ENCODE measurements at regions of chr9 and their contacts with region 1.

Region 1: DNA sequence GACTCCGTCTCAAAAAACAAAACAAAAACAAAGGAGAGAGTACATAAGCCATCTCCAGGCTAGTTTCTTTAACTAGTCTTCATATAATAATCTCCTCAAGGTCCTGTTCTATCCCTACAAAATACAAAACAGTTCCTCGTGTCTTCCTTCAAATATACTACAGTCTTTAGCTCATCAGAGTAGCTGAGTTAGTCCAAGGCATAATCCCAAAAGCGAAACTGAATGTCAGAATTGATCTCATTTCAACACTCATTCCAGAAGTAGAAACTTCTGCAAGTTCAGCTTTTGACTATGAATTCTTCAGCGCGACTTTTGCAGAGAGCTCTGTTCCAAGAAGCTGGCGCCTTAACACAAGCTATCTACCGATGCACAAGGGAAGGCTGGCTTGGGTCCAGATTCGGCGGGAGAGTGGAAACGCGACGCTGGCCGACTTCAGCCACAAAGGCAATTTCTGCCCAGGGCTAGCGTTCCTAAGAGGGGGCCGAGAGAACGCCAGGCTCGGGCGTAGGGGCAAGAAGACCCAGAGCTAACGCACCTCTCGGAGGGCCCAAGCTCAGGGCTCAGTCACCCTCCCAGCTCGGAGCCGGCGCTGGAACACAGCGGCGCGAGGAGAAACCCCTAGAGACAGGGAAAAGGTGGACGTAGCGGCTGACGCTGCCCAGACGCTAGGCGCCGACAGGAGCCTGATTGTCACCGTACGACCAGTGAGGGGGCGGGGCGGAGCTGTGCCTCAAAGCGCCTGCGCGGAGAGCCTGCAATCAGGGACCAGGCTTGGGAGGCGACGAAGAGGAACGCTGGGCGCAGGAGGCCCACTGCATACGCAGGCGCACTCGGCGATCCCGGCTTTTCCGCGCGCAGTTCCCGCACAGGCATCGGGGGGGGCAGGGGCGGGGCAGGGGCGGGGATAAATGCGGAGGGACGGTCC is 469 bp upstream of the HSDL2 start:
- DNase-seq: peak; percentile 89 to 97 (median 93)
- ATAC-seq: peak; percentile 98
- H3K4me3 ChIP-seq: peak overlapping the region; percentile 78
- H3K4me3 Mint-ChIP-seq: peak overlapping the region; percentile 86 to 100 (median 99)
- H3K27ac ChIP-seq: peak overlapping the region; percentile 85
- H3K27ac Mint-ChIP-seq: peak overlapping the region; percentile 84 to 99 (median 97)
- H3K4me1 ChIP-seq: peaks cover 14 to 17% of the 10 kb centered on the region in 2 donors
- H3K4me1 Mint-ChIP-seq: peaks cover 24 to 61% (median 53%) of the 10 kb centered on the region in 7 donors
- H3K27me3 ChIP-seq: no peaks in the 10 kb centered on the region
- H3K27me3 Mint-ChIP-seq: no peaks in the 10 kb centered on the region

Region 2: GRCh38 chr9:111483862-111484571 is 895.4 kb before region 1 on chr9 and contains the start of gene ECPAS:
- CTCF ChIA-PET with region 1: no interaction called
- POLR2A ChIA-PET with region 1: no interaction called
- intact Hi-C with region 1: loop called (anchors 5 to 10 kb)
- DNase-seq: peak; percentile 53 to 78 (median 62)
- ATAC-seq: peak; percentile 74
- H3K4me3 ChIP-seq: peak within 1 kb of the TSS; percentile 66
- H3K4me3 Mint-ChIP-seq: peak within 1 kb of the TSS; percentile 69 to 93 (median 88)
- H3K27ac ChIP-seq: peak within 1 kb of the TSS; percentile 74
- H3K27ac Mint-ChIP-seq: peak within 1 kb of the TSS; percentile 60 to 92 (median 85)
- H3K4me1 ChIP-seq: peaks cover 0 to 8% of the 10 kb centered on the region in 2 donors
- H3K4me1 Mint-ChIP-seq: peaks cover 16 to 31% (median 27%) of the 10 kb centered on the region in 7 donors
- H3K27me3 ChIP-seq: no peaks in the 10 kb centered on the region
- H3K27me3 Mint-ChIP-seq: peaks cover 0 to 13% (median 5%) of the 10 kb centered on the region in 5 donors
- total RNA-seq, gene ECPAS: 35.4 to 86.1 (median 49.2) TPM

Region 3: GRCh38 chr9:111661150-111661801 is 718.2 kb before region 1 on chr9 and contains the start of gene GNG10:
- CTCF ChIA-PET with region 1: no interaction called
- POLR2A ChIA-PET with region 1: no interaction called
- intact Hi-C with region 1: loop called (anchors 2 to 5 kb)
- DNase-seq: peak; percentile 57 to 79 (median 68)
- ATAC-seq: peak; percentile 95
- H3K4me3 ChIP-seq: peak within 1 kb of the TSS; percentile 70
- H3K4me3 Mint-ChIP-seq: peak within 1 kb of the TSS; percentile 87 to 97 (median 93)
- H3K27ac ChIP-seq: peak within 1 kb of the TSS; percentile 71
- H3K27ac Mint-ChIP-seq: peak within 1 kb of the TSS; percentile 82 to 97 (median 92)
- H3K4me1 ChIP-seq: peaks cover 18 to 31% of the 10 kb centered on the region in 2 donors
- H3K4me1 Mint-ChIP-seq: peaks cover 16 to 44% (median 32%) of the 10 kb centered on the region in 7 donors
- H3K27me3 ChIP-seq: no peaks in the 10 kb centered on the region
- H3K27me3 Mint-ChIP-seq: no peaks in the 10 kb centered on the region
- total RNA-seq, gene GNG10: 5.3 to 26.1 (median 12.2) TPM

Region 4: GRCh38 chr9:111754800-111755199 is 624.6 kb before region 1 on chr9:
- CTCF ChIA-PET with region 1: no interaction called
- POLR2A ChIA-PET with region 1: no interaction called
- intact Hi-C with region 1: no loop called
- DNase-seq: no peak
- ATAC-seq: no peak
- H3K4me3 ChIP-seq: no peak overlapping the region
- H3K4me3 Mint-ChIP-seq: no peak overlapping the region
- H3K27ac ChIP-seq: no peak overlapping the region
- H3K27ac Mint-ChIP-seq: no peak overlapping the region
- H3K4me1 ChIP-seq: no peaks in the 10 kb centered on the region
- H3K4me1 Mint-ChIP-seq: peaks cover 0 to 3% (median 0%) of the 10 kb centered on the region in 7 donors
- H3K27me3 ChIP-seq: no peaks in the 10 kb centered on the region
- H3K27me3 Mint-ChIP-seq: no peaks in the 10 kb centered on the region

Region 5: GRCh38 chr9:112097712-112098688 is 281.4 kb before region 1 on chr9:
- CTCF ChIA-PET with region 1: no interaction called
- POLR2A ChIA-PET with region 1: interaction called, 4 read pairs
- intact Hi-C with region 1: loop called in 1 of 2 experiments (anchors 5 kb)
- DNase-seq: peak; percentile 41 to 85 (median 68)
- ATAC-seq: peak; percentile 93
- H3K4me3 ChIP-seq: no peak overlapping the region
- H3K4me3 Mint-ChIP-seq: no peak overlapping the region
- H3K27ac ChIP-seq: no peak overlapping the region
- H3K27ac Mint-ChIP-seq: peak overlapping the region in 1 of 9 donors; percentile 15
- H3K4me1 ChIP-seq: peaks cover 0 to 4% of the 10 kb centered on the region in 2 donors
- H3K4me1 Mint-ChIP-seq: peaks cover 2 to 32% (median 12%) of the 10 kb centered on the region in 7 donors
- H3K27me3 ChIP-seq: no peaks in the 10 kb centered on the region
- H3K27me3 Mint-ChIP-seq: peaks cover 0 to 3% (median 0%) of the 10 kb centered on the region in 5 donors

Region 6: GRCh38 chr9:112443200-112443599 is 63.8 kb after region 1 on chr9:
- CTCF ChIA-PET with region 1: interaction called, 3 read pairs
- POLR2A ChIA-PET with region 1: no interaction called
- intact Hi-C with region 1: loop called in 1 of 2 experiments (anchors 5 kb)
- DNase-seq: peak in 6 of 9 donors; percentile 16 to 37 (median 28)
- ATAC-seq: no peak
- H3K4me3 ChIP-seq: no peak overlapping the region
- H3K4me3 Mint-ChIP-seq: no peak overlapping the region
- H3K27ac ChIP-seq: no peak overlapping the region
- H3K27ac Mint-ChIP-seq: peak overlapping the region in 1 of 9 donors; percentile 10
- H3K4me1 ChIP-seq: no peaks in the 10 kb centered on the region
- H3K4me1 Mint-ChIP-seq: peaks cover 0 to 10% (median 0%) of the 10 kb centered on the region in 7 donors
- H3K27me3 ChIP-seq: no peaks in the 10 kb centered on the region
- H3K27me3 Mint-ChIP-seq: no peaks in the 10 kb centered on the region

Region 7: DNA sequence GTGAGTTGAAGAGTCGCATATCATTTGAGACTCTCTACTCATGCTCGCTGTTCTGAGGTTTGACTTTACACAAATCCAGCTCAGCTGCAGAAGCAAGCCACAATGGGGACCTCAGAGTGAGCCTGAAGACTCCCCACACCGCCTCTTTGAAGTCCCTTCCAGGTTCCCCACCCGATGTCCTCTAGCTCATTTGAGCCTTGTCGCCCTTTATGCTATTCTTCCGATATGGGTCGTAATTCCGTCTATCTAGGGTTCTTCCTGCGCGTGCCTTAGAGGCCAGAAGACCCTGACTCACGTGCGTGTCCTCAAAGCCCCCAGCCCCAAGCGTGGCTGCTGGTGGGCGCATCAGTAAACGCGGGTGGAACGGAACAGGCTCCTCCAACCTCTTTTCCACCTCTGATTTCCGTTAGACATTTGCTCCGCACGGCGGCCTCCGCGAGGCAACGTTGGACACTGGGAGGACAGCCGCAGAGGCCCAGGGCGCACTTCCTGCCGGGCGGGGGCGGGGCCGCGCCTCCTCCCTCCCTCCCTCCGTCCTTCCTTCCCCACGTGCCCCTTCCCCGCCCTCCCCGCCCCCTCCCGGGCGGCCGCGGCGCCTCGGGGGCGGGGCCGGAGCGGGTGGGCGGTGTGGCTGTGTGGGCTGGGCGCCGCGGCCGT is 370.8 kb after region 1 on chr9 and contains the start of gene SNX30:
- CTCF ChIA-PET with region 1: no interaction called
- POLR2A ChIA-PET with region 1: interaction called, 3 read pairs
- intact Hi-C with region 1: loop called (anchors 2 kb)
- DNase-seq: peak; percentile 66 to 83 (median 75)
- ATAC-seq: peak; percentile 94
- H3K4me3 ChIP-seq: peak within 1 kb of the TSS; percentile 70
- H3K4me3 Mint-ChIP-seq: peak within 1 kb of the TSS; percentile 88 to 94 (median 92)
- H3K27ac ChIP-seq: peak within 1 kb of the TSS; percentile 68
- H3K27ac Mint-ChIP-seq: peak within 1 kb of the TSS; percentile 88 to 98 (median 96)
- H3K4me1 ChIP-seq: peaks cover 46% of the 10 kb centered on the region in 2 donors
- H3K4me1 Mint-ChIP-seq: peaks cover 39 to 66% (median 60%) of the 10 kb centered on the region in 7 donors
- H3K27me3 ChIP-seq: no peaks in the 10 kb centered on the region
- H3K27me3 Mint-ChIP-seq: peaks cover 0 to 4% (median 0%) of the 10 kb centered on the region in 5 donors
- total RNA-seq, gene SNX30: 6.6 to 15.8 (median 9.2) TPM